ENCODE measurements at regions of chr10 and their contacts with region 1.

Region 1: DNA sequence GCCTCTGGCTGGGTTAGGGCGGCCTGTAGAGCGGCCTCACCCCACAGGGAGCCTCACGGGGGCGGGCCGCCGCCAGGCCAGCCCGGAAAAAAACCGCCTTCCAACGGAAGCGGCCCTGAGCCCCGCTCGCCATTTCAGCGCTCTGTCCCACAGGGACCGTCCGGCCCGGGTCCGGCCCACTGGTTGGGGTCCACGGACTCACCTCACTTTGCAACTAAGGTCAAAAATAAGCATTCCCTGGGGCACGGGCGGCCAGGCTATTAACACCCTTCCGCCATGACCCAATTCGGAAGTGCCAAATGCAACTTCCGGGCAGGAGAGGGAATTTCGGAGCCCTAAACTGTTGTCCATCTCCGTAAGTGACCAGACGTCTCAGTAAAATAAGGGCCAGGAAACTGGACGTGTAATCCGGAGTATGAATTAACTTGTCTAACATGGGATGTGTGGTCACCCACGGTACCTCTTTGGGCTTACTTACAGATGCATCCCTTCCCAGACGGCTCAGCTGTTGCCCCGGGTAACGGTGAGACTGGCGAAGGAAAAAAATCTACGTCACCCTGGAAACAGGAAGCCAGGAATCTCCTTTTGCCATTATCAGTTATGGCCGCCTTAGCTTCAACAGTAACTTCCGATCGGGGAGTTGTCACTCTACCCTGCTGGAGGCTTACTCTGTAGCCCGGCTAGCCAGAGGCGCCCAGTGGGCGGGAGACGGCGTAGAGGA is at the start of gene BBIP1:
- DNase-seq: peak; percentile 100
- ATAC-seq: peak; percentile 88
- H3K4me3 ChIP-seq: peak within 1 kb of the TSS; percentile 76
- H3K27ac ChIP-seq: peak within 1 kb of the TSS; percentile 93
- H3K4me1 ChIP-seq: peaks cover 8% of the 10 kb centered on the region; the same call in 1 of the 2 replicates
- H3K27me3 ChIP-seq: no peaks in the 10 kb centered on the region
- CTCF ChIP-seq: no peak
- POLR2A ChIP-seq: peak; percentile 97
- RAD21 ChIP-seq: no peak
- total RNA-seq, gene BBIP1: 17.4 and 21.7 TPM in 2 replicates

Region 2: DNA sequence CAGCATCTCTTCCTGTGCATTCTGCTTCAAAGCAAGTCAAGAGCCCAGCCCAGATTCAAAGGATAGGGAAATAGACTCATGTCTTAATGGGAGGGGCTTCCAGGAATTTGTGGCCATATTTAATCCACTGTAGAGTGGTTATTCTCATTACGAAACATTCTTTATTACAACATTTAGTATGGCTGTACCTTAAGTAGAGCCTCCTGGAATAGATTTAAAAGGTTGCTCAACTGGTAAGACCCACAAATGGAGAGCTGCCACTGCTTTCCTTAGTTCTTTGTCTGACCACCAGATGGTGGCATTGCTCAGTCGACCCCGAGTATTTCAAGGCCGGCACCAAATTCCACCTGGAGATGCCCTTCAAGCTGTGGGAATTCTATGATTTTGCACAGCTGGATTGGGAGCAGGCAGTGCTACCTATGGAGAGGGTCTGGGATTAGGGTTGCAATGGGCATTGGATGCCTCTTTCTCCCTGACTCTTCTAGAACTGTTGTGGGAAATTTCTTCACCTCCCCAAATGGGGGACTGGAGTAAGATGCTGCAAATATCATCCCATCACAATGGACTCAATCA is 172.5 kb before region 1 on chr10:
- CTCF ChIA-PET with region 1: interaction called, 11 read pairs
- POLR2A ChIA-PET with region 1: no interaction called
- dilution Hi-C with region 1: no loop called
- in situ Hi-C with region 1: no loop called
- intact Hi-C with region 1: no loop called
- DNase-seq: peak; percentile 71
- ATAC-seq: peak; percentile 90
- H3K4me3 ChIP-seq: no peak overlapping the region
- H3K27ac ChIP-seq: no peak overlapping the region
- H3K4me1 ChIP-seq: no peaks in the 10 kb centered on the region; the same call in 1 of the 2 replicates
- H3K27me3 ChIP-seq: peaks cover 5% of the 10 kb centered on the region
- CTCF ChIP-seq: peak; percentile 81
- POLR2A ChIP-seq: 0 out of 2 replicates have a peak, but pooled peaks have one; percentile 30
- RAD21 ChIP-seq: peak; percentile 90

Region 3: GRCh38 chr10:110903280-110904278 is 15.2 kb before region 1 on chr10:
- CTCF ChIA-PET with region 1: interaction called, 3 read pairs
- POLR2A ChIA-PET with region 1: interaction called, 20 read pairs
- dilution Hi-C with region 1: no loop called
- in situ Hi-C with region 1: no loop called
- intact Hi-C with region 1: no loop called
- DNase-seq: peak; percentile 26
- ATAC-seq: peak; percentile 52
- H3K4me3 ChIP-seq: no peak overlapping the region
- H3K27ac ChIP-seq: no peak overlapping the region
- H3K4me1 ChIP-seq: peaks cover 6% of the 10 kb centered on the region
- H3K27me3 ChIP-seq: no peaks in the 10 kb centered on the region
- CTCF ChIP-seq: no peak
- POLR2A ChIP-seq: no peak
- RAD21 ChIP-seq: no peak

Region 4: GRCh38 chr10:111030042-111030750 is 111.4 kb after region 1 on chr10:
- CTCF ChIA-PET with region 1: no interaction called
- POLR2A ChIA-PET with region 1: no interaction called
- dilution Hi-C with region 1: no loop called
- in situ Hi-C with region 1: no loop called
- intact Hi-C with region 1: loop called (anchors 5 kb)
- DNase-seq: no peak
- ATAC-seq: no peak; the same call in 1 of the 2 replicates
- H3K4me3 ChIP-seq: no peak overlapping the region
- H3K27ac ChIP-seq: no peak overlapping the region
- H3K4me1 ChIP-seq: peaks cover 1% of the 10 kb centered on the region; the same call in 1 of the 2 replicates
- H3K27me3 ChIP-seq: no peaks in the 10 kb centered on the region
- CTCF ChIP-seq: no peak
- POLR2A ChIP-seq: no peak
- RAD21 ChIP-seq: no peak

Region 5: DNA sequence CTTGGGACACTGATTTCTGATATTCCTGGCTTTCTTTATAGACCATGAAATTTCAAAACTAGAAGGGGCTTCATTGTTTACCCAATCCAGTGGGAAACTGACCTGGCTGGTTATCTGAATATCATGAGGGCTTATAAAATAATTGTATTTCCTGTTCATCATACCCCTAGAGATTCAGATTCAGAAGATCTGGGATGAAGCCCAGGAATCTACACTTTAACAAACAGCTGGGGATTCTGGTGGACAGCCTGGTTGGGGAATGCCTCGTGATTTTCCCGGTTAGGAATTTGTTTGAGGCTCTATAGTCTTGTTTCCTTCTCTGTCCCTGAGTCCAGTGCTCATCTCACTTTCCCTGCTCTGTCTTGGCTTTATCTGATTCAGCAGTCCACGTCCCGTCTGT is 268.3 kb after region 1 on chr10:
- CTCF ChIA-PET with region 1: no interaction called
- POLR2A ChIA-PET with region 1: no interaction called
- dilution Hi-C with region 1: no loop called
- in situ Hi-C with region 1: no loop called
- intact Hi-C with region 1: no loop called
- DNase-seq: no peak
- ATAC-seq: no peak
- H3K4me3 ChIP-seq: no peak overlapping the region
- H3K27ac ChIP-seq: no peak overlapping the region
- H3K4me1 ChIP-seq: no peaks in the 10 kb centered on the region
- H3K27me3 ChIP-seq: no peaks in the 10 kb centered on the region
- CTCF ChIP-seq: no peak
- POLR2A ChIP-seq: no peak
- RAD21 ChIP-seq: no peak

Region 6: GRCh38 chr10:112631501-112632410 is 1713.0 kb after region 1 on chr10:
- CTCF ChIA-PET with region 1: no interaction called
- POLR2A ChIA-PET with region 1: no interaction called
- dilution Hi-C with region 1: no loop called
- in situ Hi-C with region 1: no loop called
- intact Hi-C with region 1: no loop called
- DNase-seq: no peak
- ATAC-seq: no peak
- H3K4me3 ChIP-seq: no peak overlapping the region
- H3K27ac ChIP-seq: no peak overlapping the region
- H3K4me1 ChIP-seq: peaks cover 5% of the 10 kb centered on the region
- H3K27me3 ChIP-seq: no peaks in the 10 kb centered on the region
- CTCF ChIP-seq: no peak
- POLR2A ChIP-seq: no peak
- RAD21 ChIP-seq: no peak

Measured in IMR-90 (cell line).